PC-3 (cell line): ENCODE measurements at regions of chr14 and their contacts with region 1.

Region 1: DNA sequence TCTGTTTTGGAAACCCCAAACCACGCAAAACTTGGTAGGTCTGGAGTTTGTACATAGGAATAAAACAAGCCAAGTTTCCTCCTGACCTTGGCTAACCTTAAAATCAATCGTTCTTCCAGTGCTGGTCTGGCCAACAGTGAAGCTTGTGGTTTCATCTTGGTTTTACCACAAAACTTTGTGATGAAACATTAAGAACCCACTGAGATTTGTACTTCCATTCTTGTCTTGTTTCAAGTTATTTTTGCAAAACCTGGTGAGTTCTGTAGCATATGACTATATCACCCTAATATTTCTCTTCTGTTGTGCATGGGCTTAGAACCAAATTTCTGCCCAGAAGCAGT is 26.4 kb downstream of the SIX1 start:
- DNase-seq: no peak
- ATAC-seq: no peak
- H3K4me3 ChIP-seq: no peak overlapping the region
- H3K27ac ChIP-seq: no peak overlapping the region
- H3K4me1 ChIP-seq: peaks cover 10% of the 10 kb centered on the region
- H3K27me3 ChIP-seq: no peaks in the 10 kb centered on the region
- CTCF ChIP-seq: no peak

Region 2: GRCh38 chr14:60331201-60332045 is 291.5 kb before region 1 on chr14:
- CTCF ChIA-PET with region 1: interaction called, 12 read pairs
- POLR2A ChIA-PET with region 1: no interaction called
- intact Hi-C with region 1: no loop called
- DNase-seq: peak; percentile 96
- ATAC-seq: peak; percentile 54
- H3K4me3 ChIP-seq: peak overlapping the region; percentile 48
- H3K27ac ChIP-seq: no peak overlapping the region
- H3K4me1 ChIP-seq: no peaks in the 10 kb centered on the region
- H3K27me3 ChIP-seq: peaks cover 14% of the 10 kb centered on the region; the same call in 1 of the 2 replicates
- CTCF ChIP-seq: peak; percentile 100

Region 3: GRCh38 chr14:60485598-60486251 is 137.2 kb before region 1 on chr14 and contains the start of gene C14orf39:
- CTCF ChIA-PET with region 1: no interaction called
- POLR2A ChIA-PET with region 1: no interaction called
- intact Hi-C with region 1: no loop called
- DNase-seq: peak; percentile 65
- ATAC-seq: peak; percentile 75
- H3K4me3 ChIP-seq: peak within 1 kb of the TSS; percentile 57
- H3K27ac ChIP-seq: no peak within 1 kb of the TSS
- H3K4me1 ChIP-seq: peaks cover 12% of the 10 kb centered on the region; the same call in 1 of the 2 replicates
- H3K27me3 ChIP-seq: peaks cover 19% of the 10 kb centered on the region; the same call in 1 of the 2 replicates
- CTCF ChIP-seq: no peak
- total RNA-seq, gene C14orf39: 0.17 and 0.47 TPM in 2 replicates

Region 4: GRCh38 chr14:60648934-60649874 is 26.3 kb after region 1 on chr14 and contains the start of gene SIX1:
- CTCF ChIA-PET with region 1: interaction called, 14 read pairs
- POLR2A ChIA-PET with region 1: no interaction called
- intact Hi-C with region 1: loop called (anchors 1 kb)
- DNase-seq: peak; percentile 97
- ATAC-seq: peak; percentile 78
- H3K4me3 ChIP-seq: peak within 1 kb of the TSS; percentile 75
- H3K27ac ChIP-seq: 0 out of 2 replicates have a peak within 1 kb of the TSS, but pooled peaks have one; percentile 6
- H3K4me1 ChIP-seq: peaks cover 21% of the 10 kb centered on the region
- H3K27me3 ChIP-seq: no peaks in the 10 kb centered on the region
- CTCF ChIP-seq: no peak
- total RNA-seq, gene SIX1: 16.5 and 18.2 TPM in 2 replicates

Region 5: DNA sequence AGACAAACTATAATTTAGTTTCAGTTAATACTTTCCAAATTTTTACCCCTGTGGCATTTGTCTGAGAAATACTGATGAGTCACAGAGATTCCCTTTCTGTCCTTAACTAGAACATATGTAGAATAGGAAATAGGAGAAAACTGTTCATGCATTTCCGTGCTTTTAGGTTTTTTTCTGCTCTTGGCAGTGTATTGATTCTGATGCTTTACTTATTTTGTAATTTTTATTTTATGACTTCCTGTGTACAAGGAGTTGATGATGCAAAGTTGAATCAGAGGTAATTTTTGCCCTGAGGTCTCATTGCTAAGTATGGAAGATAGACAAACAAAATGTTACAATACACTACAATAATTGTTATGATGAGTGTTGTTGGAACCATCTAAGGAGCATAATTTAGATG is 134.7 kb after region 1 on chr14:
- CTCF ChIA-PET with region 1: no interaction called
- POLR2A ChIA-PET with region 1: no interaction called
- intact Hi-C with region 1: loop called (anchors 1 kb)
- DNase-seq: peak; percentile 98
- ATAC-seq: peak; percentile 81
- H3K4me3 ChIP-seq: peak overlapping the region; percentile 41
- H3K27ac ChIP-seq: peak overlapping the region; percentile 78
- H3K4me1 ChIP-seq: peaks cover 59% of the 10 kb centered on the region
- H3K27me3 ChIP-seq: no peaks in the 10 kb centered on the region
- CTCF ChIP-seq: no peak

Region 6: DNA sequence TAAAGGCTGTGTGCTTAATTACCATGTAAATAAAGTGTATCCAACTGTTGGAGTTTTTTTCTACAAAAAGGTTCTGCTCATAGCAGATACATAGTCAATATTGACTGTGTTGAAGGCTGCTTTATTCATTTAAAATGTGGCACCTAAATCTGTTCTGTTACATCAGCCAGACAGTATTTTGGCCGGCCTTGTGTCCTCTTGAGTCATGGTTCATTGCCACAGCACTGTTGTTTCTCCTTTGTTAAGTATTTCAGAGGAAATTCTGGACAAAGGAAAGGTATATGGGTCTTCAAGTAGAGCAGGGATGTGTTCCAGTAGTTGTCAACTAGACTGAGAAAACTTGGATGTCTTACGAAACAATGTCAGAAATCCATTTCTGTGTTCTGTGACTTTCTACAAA is 453.7 kb after region 1 on chr14:
- CTCF ChIA-PET with region 1: interaction called, 6 read pairs
- POLR2A ChIA-PET with region 1: no interaction called
- intact Hi-C with region 1: loop called (anchors 2 kb)
- DNase-seq: no peak
- ATAC-seq: peak; percentile 4; the same call in 1 of the 2 replicates
- H3K4me3 ChIP-seq: no peak overlapping the region
- H3K27ac ChIP-seq: peak overlapping the region; percentile 82
- H3K4me1 ChIP-seq: peaks cover 33% of the 10 kb centered on the region
- H3K27me3 ChIP-seq: no peaks in the 10 kb centered on the region
- CTCF ChIP-seq: no peak

Region 7: DNA sequence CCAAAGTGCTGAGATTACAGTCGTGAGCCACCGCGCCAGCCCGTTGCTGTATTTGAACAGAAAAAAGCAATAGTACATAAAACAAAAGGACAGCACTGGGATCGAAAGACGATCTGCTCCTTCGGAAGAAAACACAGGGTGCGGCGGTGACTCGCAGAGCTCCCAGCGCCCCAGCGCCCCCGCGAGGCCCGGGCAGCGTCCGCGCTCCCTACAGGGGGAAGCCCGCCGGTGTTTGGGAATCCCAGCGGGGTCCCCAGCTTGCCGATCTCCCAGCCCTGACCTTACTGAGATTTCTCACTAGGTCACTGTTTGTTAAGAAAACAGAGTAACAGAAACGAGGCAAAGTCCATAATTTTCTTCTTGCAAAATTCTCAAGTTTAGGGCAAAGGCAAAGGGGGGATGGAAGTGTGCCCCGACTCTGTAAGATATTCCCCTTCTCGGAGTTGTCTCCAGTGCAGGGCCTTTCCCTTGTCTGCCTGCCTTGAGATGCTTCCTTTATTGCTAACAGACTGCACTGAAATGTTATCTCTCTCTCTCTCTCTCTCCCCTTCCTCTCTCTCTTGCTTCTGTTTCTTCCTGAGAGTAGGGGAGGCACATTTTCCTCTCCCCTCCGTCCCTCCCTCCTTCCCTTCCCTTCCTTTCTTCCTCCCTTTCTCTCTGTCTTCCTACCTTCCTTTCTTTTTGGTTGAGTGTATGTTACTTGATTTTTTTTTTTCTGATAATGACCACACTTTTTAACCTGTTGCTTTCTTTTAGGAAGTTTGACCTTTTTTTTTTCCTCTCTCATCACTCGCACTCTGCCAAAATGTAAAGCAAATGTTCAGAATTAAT is 566.3 kb after region 1 on chr14:
- CTCF ChIA-PET with region 1: no interaction called
- POLR2A ChIA-PET with region 1: no interaction called
- intact Hi-C with region 1: loop called (anchors 1 kb)
- DNase-seq: peak; percentile 84
- ATAC-seq: peak; percentile 91
- H3K4me3 ChIP-seq: peak overlapping the region; percentile 65
- H3K27ac ChIP-seq: no peak overlapping the region
- H3K4me1 ChIP-seq: peaks cover 16% of the 10 kb centered on the region
- H3K27me3 ChIP-seq: no peaks in the 10 kb centered on the region
- CTCF ChIP-seq: peak; percentile 90

Region 8: DNA sequence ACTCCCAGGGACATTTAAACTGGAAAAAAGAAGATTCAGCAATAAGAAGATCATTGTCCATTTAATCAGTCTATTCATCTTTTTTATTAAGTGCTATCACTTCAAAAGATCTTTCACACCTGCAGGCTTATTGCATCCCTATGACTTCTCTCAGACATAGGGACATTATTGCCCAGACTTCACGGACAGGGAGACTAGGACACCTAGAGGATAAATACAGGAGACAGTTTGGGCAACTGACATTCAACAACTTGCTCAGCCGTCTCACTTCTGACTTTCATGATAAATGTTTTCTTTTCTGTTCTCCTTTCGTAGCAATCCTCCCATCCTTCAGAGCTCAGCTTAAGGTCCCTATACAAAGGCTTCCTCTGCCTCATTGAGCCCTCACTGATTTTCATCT is 573.9 kb after region 1 on chr14:
- CTCF ChIA-PET with region 1: interaction called, 10 read pairs
- POLR2A ChIA-PET with region 1: no interaction called
- intact Hi-C with region 1: loop called (anchors 1 kb)
- DNase-seq: peak; percentile 66
- ATAC-seq: peak; percentile 95
- H3K4me3 ChIP-seq: no peak overlapping the region
- H3K27ac ChIP-seq: no peak overlapping the region
- H3K4me1 ChIP-seq: no peaks in the 10 kb centered on the region
- H3K27me3 ChIP-seq: no peaks in the 10 kb centered on the region
- CTCF ChIP-seq: peak; percentile 76